ENCODE measurements at regions of chr1 and their contacts with region 1.

Region 1: DNA sequence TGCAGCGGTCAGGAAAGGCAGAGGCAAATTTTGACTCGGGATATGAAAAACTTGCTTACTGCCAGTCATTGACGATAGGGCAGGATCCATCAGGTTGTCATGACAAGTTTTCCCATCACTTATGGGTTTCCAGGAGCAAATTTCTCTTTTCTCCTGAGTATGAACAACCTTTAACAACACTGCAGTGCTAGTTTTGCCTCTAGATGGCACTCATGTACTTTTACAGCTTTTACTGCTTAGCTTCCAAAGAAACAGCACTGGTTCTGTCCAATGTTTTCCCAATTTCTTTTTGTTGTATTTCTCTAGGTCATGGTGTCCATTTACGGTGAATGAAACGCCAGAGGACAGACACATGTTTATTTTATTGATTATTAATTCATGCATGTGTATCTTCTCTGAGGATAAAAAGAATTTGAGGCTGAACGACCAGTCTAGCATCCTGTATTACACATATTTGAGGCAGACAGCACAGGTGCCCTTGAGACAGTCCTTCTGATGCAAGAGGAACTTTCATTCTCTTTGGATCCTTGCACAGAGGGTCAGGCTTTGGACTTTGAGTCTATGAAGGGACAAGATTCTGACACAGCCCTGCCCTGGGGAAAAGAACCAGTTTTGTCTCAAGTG is 112.3 kb upstream of the TRABD2B start:
- DNase-seq: peak in 1 of 2 donors; percentile 34
- ATAC-seq: peak in 4 of 8 donors; percentile 54 to 71 (median 60)
- H3K4me3 ChIP-seq: no peak overlapping the region
- H3K27ac ChIP-seq: no peak overlapping the region
- H3K4me1 ChIP-seq: no peaks in the 10 kb centered on the region
- H3K27me3 ChIP-seq: peaks cover 0 to 7% (median 0%) of the 10 kb centered on the region in 7 donors
- CTCF ChIP-seq: peak; percentile 59 to 88 (median 83)

Region 2: DNA sequence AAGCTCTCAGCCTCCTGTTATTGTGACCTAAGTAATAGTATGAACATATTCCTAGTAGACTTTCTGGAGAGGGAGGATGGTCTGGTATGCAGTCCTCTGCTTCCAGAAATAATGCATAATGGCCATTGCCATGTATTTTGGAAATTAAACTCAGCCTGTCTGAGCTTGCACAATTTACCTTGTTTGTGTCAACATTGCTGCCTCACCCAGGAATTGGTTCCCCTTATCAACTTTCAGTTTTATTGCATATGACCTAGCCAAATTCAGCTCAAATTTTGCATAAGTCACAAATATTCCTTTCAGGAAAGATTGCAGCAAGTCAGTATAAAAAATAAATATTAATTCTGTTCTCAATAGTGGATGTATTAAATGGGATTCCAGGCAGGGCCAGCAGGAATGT is 11.1 kb after region 1 on chr1:
- intact Hi-C with region 1: loop called in 1 of 10 experiments (anchors 1 kb)
- DNase-seq: no peak
- ATAC-seq: no peak
- H3K4me3 ChIP-seq: no peak overlapping the region
- H3K27ac ChIP-seq: no peak overlapping the region
- H3K4me1 ChIP-seq: no peaks in the 10 kb centered on the region
- H3K27me3 ChIP-seq: peaks cover 0 to 12% (median 0%) of the 10 kb centered on the region in 7 donors
- CTCF ChIP-seq: no peak

Region 3: GRCh38 chr1:48202030-48202752 is 92.7 kb after region 1 on chr1:
- intact Hi-C with region 1: loop called (anchors 1 to 5 kb)
- DNase-seq: peak; percentile 57
- ATAC-seq: peak in 7 of 8 donors; percentile 54 to 68 (median 58)
- H3K4me3 ChIP-seq: no peak overlapping the region
- H3K27ac ChIP-seq: no peak overlapping the region
- H3K4me1 ChIP-seq: peaks cover 0 to 5% (median 0%) of the 10 kb centered on the region in 9 donors
- H3K27me3 ChIP-seq: peaks cover 0 to 9% (median 0%) of the 10 kb centered on the region in 7 donors
- CTCF ChIP-seq: peak; percentile 68 to 88 (median 85)

Region 4: DNA sequence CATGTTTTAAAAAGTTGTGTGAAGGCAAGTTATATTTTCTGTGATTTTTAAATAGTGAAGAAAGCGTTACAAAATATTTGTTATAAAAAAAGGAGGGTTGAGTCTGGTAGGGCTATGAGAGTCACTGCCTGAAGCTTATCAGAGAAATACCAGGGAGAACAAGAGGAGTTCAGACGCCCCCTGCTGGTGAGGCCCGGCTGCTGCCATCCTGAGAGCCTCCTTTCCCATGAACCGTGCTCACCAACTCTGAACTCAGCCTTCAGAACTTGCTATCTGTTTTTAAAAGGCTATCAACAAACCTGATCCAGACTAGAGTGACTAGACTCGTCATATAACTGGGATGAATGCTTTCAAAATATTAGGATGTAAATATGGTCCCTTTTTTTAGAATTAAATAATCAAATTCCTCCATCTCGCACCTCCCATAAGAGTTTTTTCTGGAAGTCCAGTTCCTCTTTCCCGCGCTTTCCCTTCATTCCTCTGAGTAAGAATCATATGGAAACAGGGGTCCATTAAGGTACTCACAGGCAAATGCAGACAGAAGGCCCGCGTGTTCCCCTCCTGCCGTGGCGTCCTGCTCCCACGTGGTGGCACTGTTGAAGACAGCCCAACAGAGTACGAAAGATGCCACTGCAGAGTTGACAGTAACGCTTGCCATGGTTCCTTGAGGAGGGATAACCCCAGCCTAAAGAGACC is 388.7 kb after region 1 on chr1:
- intact Hi-C with region 1: loop called in 6 of 10 experiments (anchors 2 to 10 kb)
- DNase-seq: peak; percentile 78 to 80
- ATAC-seq: peak; percentile 82 to 93 (median 89)
- H3K4me3 ChIP-seq: no peak overlapping the region
- H3K27ac ChIP-seq: no peak overlapping the region
- H3K4me1 ChIP-seq: peaks cover 0 to 15% (median 0%) of the 10 kb centered on the region in 9 donors
- H3K27me3 ChIP-seq: peaks cover 0 to 5% (median 0%) of the 10 kb centered on the region in 7 donors
- CTCF ChIP-seq: peak; percentile 61 to 96 (median 89)

Region 5: DNA sequence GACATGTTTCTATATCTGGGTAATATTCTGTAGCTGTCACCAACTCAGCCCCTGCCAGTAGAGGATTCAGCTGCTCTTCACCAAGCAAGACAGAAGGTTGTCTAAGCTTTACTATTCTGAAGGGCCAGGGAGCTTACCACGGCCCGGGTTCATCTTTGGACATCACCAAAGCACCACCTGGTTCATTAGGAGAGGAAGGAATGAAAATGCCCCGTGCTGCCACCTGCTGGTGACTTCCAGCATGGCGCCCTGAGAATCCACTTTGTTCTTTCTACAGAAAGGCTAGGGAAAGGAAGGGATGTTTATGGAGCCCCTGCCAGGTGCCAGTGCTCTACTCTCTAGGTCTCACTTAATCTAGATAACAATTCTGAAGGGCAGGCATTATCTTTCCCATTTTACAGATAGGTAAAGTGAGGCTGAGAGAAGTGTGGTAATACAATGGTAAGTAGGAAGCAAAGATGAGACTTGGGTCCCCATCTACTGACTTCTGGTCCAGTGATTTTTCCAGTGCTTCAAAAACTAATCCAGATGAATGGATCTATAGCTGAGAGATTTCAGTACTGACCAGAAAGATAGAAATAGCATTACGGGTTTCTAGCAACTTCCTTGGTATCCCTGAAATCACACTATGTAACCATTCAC is 587.7 kb after region 1 on chr1:
- intact Hi-C with region 1: loop called in 1 of 10 experiments (anchors 5 kb)
- DNase-seq: peak; percentile 29 to 58
- ATAC-seq: peak in 2 of 8 donors; percentile 36 to 52
- H3K4me3 ChIP-seq: no peak overlapping the region
- H3K27ac ChIP-seq: no peak overlapping the region
- H3K4me1 ChIP-seq: no peaks in the 10 kb centered on the region
- H3K27me3 ChIP-seq: peaks cover 0 to 61% (median 22%) of the 10 kb centered on the region in 7 donors
- CTCF ChIP-seq: peak; percentile 77 to 94 (median 90)

Measured in heart right ventricle (tissue), 16 donors.